Heart left ventricle (tissue), 16 donors: ENCODE measurements at regions of chr12 and their contacts with region 1.

Region 1: GRCh38 chr12:50283229-50283923 is at the start of gene LIMA1:
- DNase-seq: peak; percentile 91 to 96 (median 92)
- ATAC-seq: peak; percentile 97 to 100 (median 99)
- H3K4me3 ChIP-seq: peak within 1 kb of the TSS; percentile 73 to 99 (median 90)
- H3K27ac ChIP-seq: peak within 1 kb of the TSS; percentile 58 to 91 (median 88)
- H3K4me1 ChIP-seq: peaks cover 0 to 35% (median 26%) of the 10 kb centered on the region in 12 donors
- H3K27me3 ChIP-seq: no peaks in the 10 kb centered on the region
- CTCF ChIP-seq: peak in 8 of 12 donors; percentile 11 to 71 (median 44)
- POLR2A ChIP-seq: peak in 1 of 2 donors; percentile 74
- total RNA-seq, gene LIMA1: 12.7 to 38.8 (median 14.8) TPM

Region 2: DNA sequence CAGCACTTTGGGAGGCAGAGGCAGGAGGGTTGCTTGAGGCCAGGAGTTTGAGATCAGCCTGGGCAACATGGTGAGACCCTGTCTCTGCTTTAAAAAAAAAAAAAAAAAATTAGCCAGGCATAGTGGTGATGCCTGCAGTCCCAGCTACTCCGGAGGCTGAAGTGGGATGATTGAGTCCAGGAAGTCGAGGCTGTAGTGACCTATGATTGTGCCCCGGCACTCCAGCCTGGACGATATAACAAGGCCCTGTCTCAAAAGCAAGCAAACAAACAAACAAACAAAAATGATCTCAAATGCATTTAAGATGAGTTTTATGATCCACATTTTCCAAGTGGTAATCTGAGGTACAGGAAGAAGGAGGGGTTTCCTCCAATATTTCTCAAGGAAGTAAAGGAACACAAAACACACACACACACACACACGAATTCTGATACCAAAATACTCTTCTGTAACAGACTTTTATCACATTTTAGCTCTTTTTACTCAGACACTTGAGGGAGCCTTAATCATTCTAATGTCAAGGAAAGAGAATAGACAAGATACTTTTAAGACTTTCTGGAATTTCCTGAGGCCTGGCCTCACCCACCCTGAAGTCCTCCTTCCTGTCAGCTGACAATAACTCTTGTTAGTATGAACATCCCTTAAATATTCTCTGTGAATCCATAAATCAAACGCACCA is 71.8 kb before region 1 on chr12:
- intact Hi-C with region 1: loop called in 1 of 10 experiments (anchors 5 kb)
- DNase-seq: no peak
- ATAC-seq: peak in 3 of 4 donors; percentile 27 to 79 (median 64)
- H3K4me3 ChIP-seq: peak overlapping the region in 1 of 12 donors; percentile 26
- H3K27ac ChIP-seq: peak overlapping the region; percentile 19 to 83 (median 70)
- H3K4me1 ChIP-seq: peaks cover 0 to 32% (median 13%) of the 10 kb centered on the region in 12 donors
- H3K27me3 ChIP-seq: no peaks in the 10 kb centered on the region
- CTCF ChIP-seq: peak in 4 of 12 donors; percentile 8 to 35 (median 28)
- POLR2A ChIP-seq: no peak

Region 3: DNA sequence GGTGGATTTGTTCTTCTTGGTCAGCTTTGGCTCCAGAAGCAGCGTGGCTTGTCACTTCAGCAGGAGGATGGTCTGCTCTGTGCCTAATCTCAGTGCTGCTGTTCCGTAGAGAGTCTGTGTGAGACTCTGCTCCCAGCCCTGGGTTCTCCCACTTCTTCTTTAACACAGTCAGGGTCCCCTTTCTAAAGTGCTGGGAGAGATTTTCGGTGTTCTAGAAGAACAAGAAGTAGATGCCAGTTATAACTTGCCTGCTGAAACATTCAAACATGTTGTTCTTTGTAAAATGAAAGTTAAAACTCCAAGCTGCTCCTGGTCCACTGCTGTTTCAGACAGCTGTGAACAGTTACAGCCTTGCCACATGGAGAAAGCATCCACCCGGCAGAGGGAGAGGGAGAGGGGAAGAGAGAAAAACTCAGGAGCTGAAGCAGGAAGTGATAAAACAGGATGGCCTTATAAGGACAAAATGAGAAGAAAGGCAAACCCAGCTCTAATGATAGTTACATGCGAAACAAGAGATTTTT is 61.0 kb before region 1 on chr12:
- intact Hi-C with region 1: loop called in 5 of 10 experiments (anchors 2 to 10 kb)
- DNase-seq: peak in 4 of 5 donors; percentile 45 to 62 (median 56)
- ATAC-seq: peak; percentile 71 to 91 (median 89)
- H3K4me3 ChIP-seq: peak overlapping the region; percentile 5 to 64 (median 50)
- H3K27ac ChIP-seq: peak overlapping the region; percentile 37 to 88 (median 74)
- H3K4me1 ChIP-seq: peaks cover 0 to 45% (median 12%) of the 10 kb centered on the region in 12 donors
- H3K27me3 ChIP-seq: no peaks in the 10 kb centered on the region
- CTCF ChIP-seq: peak in 8 of 12 donors; percentile 7 to 54 (median 31)
- POLR2A ChIP-seq: peak in 1 of 2 donors; percentile 19